ENCODE measurements at regions of chr2 and their contacts with region 1.

Region 1: DNA sequence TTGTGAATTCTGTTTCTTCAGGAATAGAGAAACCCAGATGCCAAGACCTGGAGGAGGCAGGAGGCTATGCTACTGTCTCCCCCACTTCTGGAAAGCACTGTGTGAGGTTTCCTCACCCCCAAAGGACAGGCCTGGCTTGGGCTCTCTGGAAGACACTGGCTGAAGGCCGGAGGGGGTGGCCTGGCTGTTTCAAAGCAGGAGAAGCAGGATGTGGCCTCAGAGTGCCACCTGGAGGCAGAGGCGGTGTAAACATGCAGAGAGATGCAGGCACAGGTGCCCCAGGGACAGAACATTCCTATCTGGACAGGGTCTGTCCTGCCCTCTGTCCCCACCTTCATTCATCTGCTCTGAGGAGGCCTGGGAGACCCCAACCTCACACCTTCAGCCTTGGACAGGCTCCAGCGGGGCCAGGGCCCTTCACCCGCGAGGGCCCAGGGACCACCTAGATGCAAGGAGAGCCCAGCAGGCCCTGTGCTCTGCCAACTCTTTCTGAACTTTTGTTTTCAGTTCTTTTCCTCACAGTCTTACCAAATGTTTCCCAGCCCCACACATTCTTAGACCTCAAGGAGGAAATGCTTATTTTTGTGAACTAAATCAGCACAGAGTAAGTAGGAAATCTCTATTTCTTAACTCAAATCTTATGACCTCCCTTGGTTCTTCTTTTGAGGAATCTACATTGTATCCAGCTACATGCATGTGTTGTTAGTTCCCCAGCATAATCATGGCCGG is 79.2 kb downstream of the LONRF2 start:
- DNase-seq: peak; percentile 71
- H3K4me3 Mint-ChIP-seq: no peak overlapping the region
- H3K27ac Mint-ChIP-seq: no peak overlapping the region
- H3K4me1 Mint-ChIP-seq: no peaks in the 10 kb centered on the region
- H3K27me3 Mint-ChIP-seq: peaks cover 20% of the 10 kb centered on the region

Region 2: GRCh38 chr2:99559075-99559662 is 683.9 kb before region 1 on chr2:
- CTCF ChIA-PET with region 1: interaction called, 20 read pairs
- DNase-seq: peak; percentile 87
- H3K4me3 Mint-ChIP-seq: no peak overlapping the region
- H3K27ac Mint-ChIP-seq: no peak overlapping the region
- H3K4me1 Mint-ChIP-seq: no peaks in the 10 kb centered on the region
- H3K27me3 Mint-ChIP-seq: peaks cover 3% of the 10 kb centered on the region

Region 3: DNA sequence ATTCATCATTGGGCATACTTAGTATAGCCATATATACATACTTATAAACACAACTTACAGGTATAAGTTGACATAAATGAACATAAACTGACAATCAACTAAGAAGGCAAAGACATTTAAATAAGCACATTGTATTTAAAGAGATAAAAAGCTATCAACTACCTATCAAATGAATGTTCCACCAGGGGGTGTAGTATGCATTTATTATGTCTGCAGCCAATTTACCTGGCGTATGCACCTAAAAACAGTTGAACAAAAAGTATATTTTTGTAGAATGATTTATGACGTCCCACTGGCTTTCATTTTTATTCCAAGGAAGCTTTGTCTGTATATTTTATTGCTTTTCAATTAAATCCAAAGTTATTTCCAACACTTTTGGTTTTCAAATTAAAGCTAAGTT is 424.2 kb before region 1 on chr2:
- CTCF ChIA-PET with region 1: interaction called, 23 read pairs
- DNase-seq: no peak
- H3K4me3 Mint-ChIP-seq: no peak overlapping the region
- H3K27ac Mint-ChIP-seq: no peak overlapping the region
- H3K4me1 Mint-ChIP-seq: no peaks in the 10 kb centered on the region
- H3K27me3 Mint-ChIP-seq: peaks cover 4% of the 10 kb centered on the region

Measured in activated naive CD4-positive, alpha-beta T cell treated with anti-CD3 and anti-CD28 coated beads, Interleukin-2, amount 10 ng/mL, durations not matched to agents 7 days and 5 days (primary cell).